Aorta (tissue), 5 donors: ENCODE measurements at regions of chr14 and their contacts with region 1.

Region 1: DNA sequence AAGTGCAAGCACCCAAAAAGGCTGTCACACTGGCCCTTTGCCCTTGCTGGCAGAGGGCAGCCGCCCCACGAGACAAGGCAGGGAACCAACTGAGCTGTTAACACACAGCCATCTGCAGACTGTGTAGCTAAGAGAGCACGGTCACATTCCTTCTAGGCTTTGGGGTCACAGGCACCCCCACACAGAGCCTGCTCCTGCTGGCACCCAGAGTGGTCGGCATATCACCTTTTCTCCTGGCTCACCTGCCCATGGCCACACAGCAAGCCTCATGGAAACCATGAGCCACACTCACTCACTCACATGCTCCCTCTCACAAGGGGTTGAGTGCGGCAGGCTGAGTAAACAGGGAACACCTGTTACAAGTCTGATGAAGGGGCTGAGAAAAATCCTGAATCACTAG is 214.5 kb downstream of the PCNX1 start:
- DNase-seq: no peak
- ATAC-seq: no peak
- H3K4me3 ChIP-seq: no peak overlapping the region
- H3K27ac ChIP-seq: no peak overlapping the region
- H3K4me1 ChIP-seq: peaks cover 0 to 3% of the 10 kb centered on the region in 2 donors
- H3K27me3 ChIP-seq: no peaks in the 10 kb centered on the region

Region 2: DNA sequence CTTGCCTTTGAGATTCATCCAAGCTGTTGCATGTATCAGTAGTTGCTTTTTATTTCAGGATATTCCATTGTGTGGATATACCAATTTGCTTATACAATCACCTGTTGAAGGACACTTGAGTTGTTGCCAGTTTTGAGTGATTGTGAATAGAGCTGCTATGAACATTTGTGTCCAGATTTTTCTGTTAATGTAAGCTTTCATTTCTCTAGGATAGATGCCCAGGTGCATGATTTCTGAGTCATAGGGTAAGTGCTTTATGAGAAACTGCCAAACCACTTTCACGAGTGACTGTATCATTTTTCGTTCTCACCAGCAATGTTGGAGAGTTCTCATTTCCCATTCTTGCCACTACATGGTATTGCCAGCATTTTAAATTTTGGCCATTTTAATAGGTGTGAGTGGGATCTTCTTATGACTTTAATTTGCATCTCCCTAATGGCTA is 376.0 kb after region 1 on chr14:
- intact Hi-C with region 1: loop called in 1 of 2 experiments (anchors 10 kb)
- DNase-seq: no peak
- ATAC-seq: no peak
- H3K4me3 ChIP-seq: no peak overlapping the region
- H3K27ac ChIP-seq: no peak overlapping the region
- H3K4me1 ChIP-seq: peaks cover 4% of the 10 kb centered on the region in 2 donors
- H3K27me3 ChIP-seq: no peaks in the 10 kb centered on the region